CD4-positive, alpha-beta T cell (primary cell): ENCODE measurements at regions of chr15 and their contacts with region 1.

Region 1: DNA sequence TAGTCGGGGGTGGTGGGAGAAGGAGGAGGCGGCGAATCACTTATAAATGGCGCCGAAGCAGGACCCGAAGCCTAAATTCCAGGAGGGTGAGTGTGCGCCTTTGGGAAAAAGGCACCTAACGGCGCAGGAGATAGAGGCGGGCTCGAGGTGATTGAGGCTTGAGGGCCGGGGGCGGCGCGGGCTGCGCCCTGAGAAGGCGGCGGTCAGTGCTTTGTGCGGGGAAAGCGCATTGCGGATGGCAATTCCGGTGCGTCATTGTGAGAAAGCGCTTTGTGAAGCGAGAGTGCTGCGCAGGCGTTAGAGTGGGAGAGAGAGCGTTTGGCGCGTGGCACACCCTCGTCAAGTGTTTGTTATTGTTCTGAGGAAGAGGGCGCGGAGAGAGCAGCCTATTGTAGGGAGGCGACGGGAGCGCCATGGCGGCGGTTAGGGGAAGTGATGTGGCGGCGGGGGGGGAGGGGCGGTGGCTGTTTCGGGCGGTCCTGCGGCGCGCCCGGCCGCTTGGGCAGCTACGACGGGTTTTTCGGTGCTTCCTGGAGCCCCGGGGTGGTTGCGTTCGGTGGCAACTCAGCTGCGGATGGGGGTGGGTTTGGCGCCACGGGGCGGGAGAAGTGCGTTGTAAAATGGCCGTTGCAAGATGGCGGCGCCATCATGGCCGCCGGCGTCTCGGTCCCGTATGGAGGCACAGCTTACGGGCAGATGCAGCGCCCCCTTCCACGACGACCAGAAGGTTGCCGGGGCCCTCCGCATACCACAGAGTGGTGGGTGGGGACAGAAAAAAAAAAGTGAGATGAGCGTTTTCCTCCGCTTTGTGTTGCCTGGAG is 492 bp downstream of the MORF4L1 start:
- DNase-seq: peak; percentile 77 to 97 (median 86)
- ATAC-seq: peak; percentile 70
- H3K4me3 ChIP-seq: peak overlapping the region; percentile 98
- H3K4me3 Mint-ChIP-seq: peak overlapping the region; percentile 100
- H3K27ac ChIP-seq: peak overlapping the region; percentile 100
- H3K27ac Mint-ChIP-seq: peak overlapping the region; percentile 100
- H3K4me1 ChIP-seq: peaks cover 35% of the 10 kb centered on the region
- H3K4me1 Mint-ChIP-seq: peaks cover 49% of the 10 kb centered on the region
- H3K27me3 ChIP-seq: no peaks in the 10 kb centered on the region
- H3K27me3 Mint-ChIP-seq: no peaks in the 10 kb centered on the region
- CTCF ChIP-seq: peak; percentile 64

Region 2: DNA sequence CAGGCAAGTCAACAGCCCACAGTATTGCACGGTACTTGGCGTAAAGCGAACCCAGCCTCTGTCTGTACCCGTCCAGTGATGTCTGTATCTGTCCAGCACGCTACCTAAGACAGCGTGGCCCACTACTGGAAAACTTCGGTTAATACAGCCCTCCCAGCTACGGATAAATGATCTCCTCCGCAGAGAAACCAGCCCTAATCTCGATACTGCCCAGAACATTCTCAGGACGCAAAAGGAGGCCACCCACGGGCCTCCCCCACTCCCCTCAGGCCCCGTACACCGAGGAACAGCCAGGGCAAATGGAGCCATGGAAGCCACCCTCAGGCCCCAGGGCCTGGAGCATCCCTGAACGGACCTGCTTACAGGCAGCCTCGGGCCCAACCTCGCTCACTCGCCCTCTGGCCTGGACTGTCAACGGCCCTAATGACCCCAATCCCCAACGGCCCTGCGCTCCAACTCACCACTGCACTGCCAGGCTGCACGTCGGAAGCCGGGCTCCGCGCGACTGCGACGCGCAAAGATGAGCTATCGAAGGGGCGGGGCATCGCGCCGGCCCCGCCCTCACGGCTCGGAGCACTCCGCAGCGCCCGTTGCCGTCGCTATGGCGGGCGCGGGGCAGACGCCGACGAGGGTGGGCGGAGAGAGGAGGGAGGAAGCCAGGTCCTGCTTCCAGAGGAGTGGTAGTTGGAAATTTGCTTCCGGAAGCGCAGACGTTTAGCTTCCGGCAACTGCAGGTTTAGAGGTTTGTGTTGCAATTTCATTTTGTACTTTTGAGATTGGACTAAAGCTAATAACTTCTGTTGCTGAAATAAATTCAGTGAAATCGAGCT is 573.9 kb before region 1 on chr15 and contains the start of gene SKIC8:
- CTCF ChIA-PET with region 1: no interaction called
- POLR2A ChIA-PET with region 1: interaction called, 4 read pairs
- intact Hi-C with region 1: loop called in 1 of 2 experiments (anchors 2 kb)
- DNase-seq: peak; percentile 79 to 96 (median 87)
- ATAC-seq: peak; percentile 96
- H3K4me3 ChIP-seq: peak within 1 kb of the TSS; percentile 99
- H3K4me3 Mint-ChIP-seq: peak within 1 kb of the TSS; percentile 96
- H3K27ac ChIP-seq: peak within 1 kb of the TSS; percentile 50 to 77
- H3K27ac Mint-ChIP-seq: peak within 1 kb of the TSS; percentile 88
- H3K4me1 ChIP-seq: peaks cover 18% of the 10 kb centered on the region
- H3K4me1 Mint-ChIP-seq: peaks cover 30% of the 10 kb centered on the region
- H3K27me3 ChIP-seq: no peaks in the 10 kb centered on the region
- H3K27me3 Mint-ChIP-seq: no peaks in the 10 kb centered on the region
- CTCF ChIP-seq: no peak
- total RNA-seq, gene SKIC8: 13.3 to 16.7 TPM

Region 3: GRCh38 chr15:78750566-78750965 is 122.6 kb before region 1 on chr15:
- CTCF ChIA-PET with region 1: interaction called, 3 read pairs
- POLR2A ChIA-PET with region 1: no interaction called
- intact Hi-C with region 1: loop called in 1 of 2 experiments (anchors 10 kb)
- DNase-seq: no peak
- ATAC-seq: no peak
- H3K4me3 ChIP-seq: no peak overlapping the region
- H3K4me3 Mint-ChIP-seq: peak overlapping the region; percentile 7
- H3K27ac ChIP-seq: no peak overlapping the region
- H3K27ac Mint-ChIP-seq: no peak overlapping the region
- H3K4me1 ChIP-seq: peaks cover 10% of the 10 kb centered on the region
- H3K4me1 Mint-ChIP-seq: peaks cover 9% of the 10 kb centered on the region
- H3K27me3 ChIP-seq: no peaks in the 10 kb centered on the region
- H3K27me3 Mint-ChIP-seq: no peaks in the 10 kb centered on the region
- CTCF ChIP-seq: no peak

Region 4: GRCh38 chr15:78859971-78860732 is 13.0 kb before region 1 on chr15:
- CTCF ChIA-PET with region 1: interaction called, 8 read pairs
- POLR2A ChIA-PET with region 1: interaction called, 16 read pairs
- intact Hi-C with region 1: loop called in 1 of 2 experiments (anchors 1 kb)
- DNase-seq: peak; percentile 40 to 82 (median 50)
- ATAC-seq: peak; percentile 74
- H3K4me3 ChIP-seq: peak overlapping the region; percentile 54
- H3K4me3 Mint-ChIP-seq: peak overlapping the region; percentile 86
- H3K27ac ChIP-seq: no peak overlapping the region
- H3K27ac Mint-ChIP-seq: peak overlapping the region; percentile 91
- H3K4me1 ChIP-seq: peaks cover 10% of the 10 kb centered on the region
- H3K4me1 Mint-ChIP-seq: peaks cover 14% of the 10 kb centered on the region
- H3K27me3 ChIP-seq: no peaks in the 10 kb centered on the region
- H3K27me3 Mint-ChIP-seq: peaks cover 3% of the 10 kb centered on the region
- CTCF ChIP-seq: peak; percentile 55

Region 5: DNA sequence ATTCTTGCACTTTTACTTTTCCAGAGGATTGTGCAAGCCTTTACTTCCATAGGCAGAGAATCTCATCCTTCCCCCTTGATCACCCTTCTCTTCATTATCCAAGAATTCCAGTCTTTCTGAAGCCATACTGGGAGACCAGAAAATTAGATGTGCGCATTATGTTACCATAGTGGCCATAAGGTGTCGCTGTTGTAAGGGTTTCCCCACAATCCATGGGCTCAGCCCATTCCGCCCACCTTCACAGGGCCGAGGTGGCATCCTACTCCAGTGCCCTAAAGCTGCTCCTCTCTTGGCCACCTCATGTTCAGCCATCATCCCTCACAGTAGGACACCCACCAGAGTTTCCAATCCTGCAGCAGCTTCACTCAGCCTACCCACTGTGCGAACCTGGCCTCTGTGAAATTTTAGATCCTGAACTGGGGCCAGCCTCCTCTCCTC is 36.6 kb after region 1 on chr15:
- CTCF ChIA-PET with region 1: interaction called, 5 read pairs
- POLR2A ChIA-PET with region 1: interaction called, 12 read pairs
- intact Hi-C with region 1: no loop called
- DNase-seq: peak in 4 of 14 experiments; percentile 19 to 68 (median 51)
- ATAC-seq: peak; percentile 52
- H3K4me3 ChIP-seq: no peak overlapping the region
- H3K4me3 Mint-ChIP-seq: no peak overlapping the region
- H3K27ac ChIP-seq: no peak overlapping the region
- H3K27ac Mint-ChIP-seq: peak overlapping the region; percentile 10
- H3K4me1 ChIP-seq: peaks cover 13% of the 10 kb centered on the region
- H3K4me1 Mint-ChIP-seq: peaks cover 31% of the 10 kb centered on the region
- H3K27me3 ChIP-seq: no peaks in the 10 kb centered on the region
- H3K27me3 Mint-ChIP-seq: no peaks in the 10 kb centered on the region
- CTCF ChIP-seq: peak; percentile 41